Activated CD8-positive, alpha-beta T cell treated with anti-CD3 and anti-CD28 coated beads, Interleukin-2, amount 10 ng/mL, durations not matched to agents 7 days and 5 days (primary cell): ENCODE measurements at regions of chr1 and their contacts with region 1.

Region 1: GRCh38 chr1:29033829-29034466 is 89.8 kb downstream of the TMEM200B start:
- DNase-seq: no peak
- ATAC-seq: peak; percentile 47
- H3K4me3 Mint-ChIP-seq: no peak overlapping the region
- H3K27ac Mint-ChIP-seq: no peak overlapping the region
- H3K4me1 Mint-ChIP-seq: no peaks in the 10 kb centered on the region
- H3K27me3 Mint-ChIP-seq: no peaks in the 10 kb centered on the region

Region 2: GRCh38 chr1:28886731-28887418 is 147.1 kb before region 1 on chr1:
- CTCF ChIA-PET with region 1: interaction called, 315 read pairs
- POLR2A ChIA-PET with region 1: interaction called, 5 read pairs
- DNase-seq: peak; percentile 92
- ATAC-seq: peak; percentile 81
- H3K4me3 Mint-ChIP-seq: peak overlapping the region; percentile 80
- H3K27ac Mint-ChIP-seq: peak overlapping the region; percentile 97
- H3K4me1 Mint-ChIP-seq: peaks cover 56% of the 10 kb centered on the region
- H3K27me3 Mint-ChIP-seq: no peaks in the 10 kb centered on the region

Region 3: DNA sequence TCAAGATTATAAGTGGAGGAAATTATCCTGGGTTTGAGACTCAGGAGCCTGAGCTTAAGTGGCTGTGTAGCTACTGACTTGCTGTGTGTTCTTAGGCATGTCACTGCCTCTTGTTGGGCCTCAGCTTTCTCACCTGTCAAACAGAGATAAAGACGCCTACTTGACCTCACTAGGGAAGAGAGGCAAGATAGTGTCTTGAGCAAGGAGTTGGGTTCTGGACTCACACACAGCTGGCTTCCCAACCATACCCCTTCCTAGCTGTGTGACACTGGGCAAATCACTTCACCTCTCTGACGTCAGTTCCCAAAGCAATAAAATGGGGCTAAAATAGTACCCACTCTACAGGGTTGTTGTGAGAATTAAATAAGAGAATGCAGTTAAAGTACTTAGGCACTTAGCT is 131.2 kb before region 1 on chr1:
- CTCF ChIA-PET with region 1: interaction called, 17 read pairs
- POLR2A ChIA-PET with region 1: no interaction called
- DNase-seq: no peak
- ATAC-seq: no peak
- H3K4me3 Mint-ChIP-seq: no peak overlapping the region
- H3K27ac Mint-ChIP-seq: no peak overlapping the region
- H3K4me1 Mint-ChIP-seq: peaks cover 14% of the 10 kb centered on the region
- H3K27me3 Mint-ChIP-seq: no peaks in the 10 kb centered on the region

Region 4: GRCh38 chr1:28983509-28984310 is 50.2 kb before region 1 on chr1:
- CTCF ChIA-PET with region 1: no interaction called
- POLR2A ChIA-PET with region 1: no interaction called
- DNase-seq: no peak
- ATAC-seq: no peak
- H3K4me3 Mint-ChIP-seq: no peak overlapping the region
- H3K27ac Mint-ChIP-seq: no peak overlapping the region
- H3K4me1 Mint-ChIP-seq: peaks cover 12% of the 10 kb centered on the region
- H3K27me3 Mint-ChIP-seq: no peaks in the 10 kb centered on the region

Region 5: DNA sequence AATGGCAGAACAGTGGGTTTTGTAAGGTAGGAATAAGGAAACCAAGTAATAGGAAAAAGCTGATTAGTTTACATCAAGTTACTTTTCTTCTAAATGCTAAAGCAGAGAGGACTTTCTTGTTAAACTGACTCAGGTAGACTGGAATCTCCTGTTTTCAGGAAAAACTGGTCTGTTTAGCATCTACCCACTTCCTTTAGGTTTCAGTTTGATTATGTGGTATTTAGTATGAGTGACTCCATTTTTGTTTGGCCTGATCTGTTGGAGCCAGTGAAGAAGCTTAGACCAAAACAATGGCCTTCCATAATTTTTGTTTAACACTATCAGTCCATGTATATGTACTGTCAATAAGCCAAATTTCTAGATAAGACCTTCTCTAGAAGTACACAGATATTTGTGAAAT is 31.2 kb before region 1 on chr1:
- CTCF ChIA-PET with region 1: interaction called, 10 read pairs
- POLR2A ChIA-PET with region 1: interaction called, 4 read pairs
- DNase-seq: no peak
- ATAC-seq: no peak
- H3K4me3 Mint-ChIP-seq: no peak overlapping the region
- H3K27ac Mint-ChIP-seq: no peak overlapping the region
- H3K4me1 Mint-ChIP-seq: peaks cover 8% of the 10 kb centered on the region
- H3K27me3 Mint-ChIP-seq: no peaks in the 10 kb centered on the region

Region 6: DNA sequence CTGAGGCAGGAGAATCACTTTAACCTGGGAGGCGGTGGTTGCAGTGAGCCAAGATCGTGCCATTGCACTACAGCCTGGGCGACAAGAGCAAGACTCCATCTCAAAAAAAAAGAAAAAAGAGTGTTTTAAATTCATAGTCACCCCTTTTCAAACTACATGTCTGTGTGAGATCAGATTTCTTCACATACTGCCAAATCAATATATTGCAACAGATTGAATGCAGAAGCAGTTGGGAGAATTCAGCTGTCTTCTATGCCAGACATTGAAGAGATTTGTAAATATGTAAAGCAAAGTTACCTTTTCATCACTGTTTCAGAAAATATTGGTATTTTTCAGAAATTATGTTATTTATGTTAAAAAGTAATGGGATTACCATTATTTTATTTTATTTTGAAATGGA is 11.3 kb before region 1 on chr1:
- CTCF ChIA-PET with region 1: interaction called, 18 read pairs
- POLR2A ChIA-PET with region 1: no interaction called
- DNase-seq: no peak
- ATAC-seq: no peak
- H3K4me3 Mint-ChIP-seq: no peak overlapping the region
- H3K27ac Mint-ChIP-seq: no peak overlapping the region
- H3K4me1 Mint-ChIP-seq: peaks cover 5% of the 10 kb centered on the region
- H3K27me3 Mint-ChIP-seq: no peaks in the 10 kb centered on the region

Region 7: GRCh38 chr1:29090937-29091618 is 57.1 kb after region 1 on chr1:
- CTCF ChIA-PET with region 1: no interaction called
- POLR2A ChIA-PET with region 1: no interaction called
- DNase-seq: no peak
- ATAC-seq: no peak
- H3K4me3 Mint-ChIP-seq: no peak overlapping the region
- H3K27ac Mint-ChIP-seq: no peak overlapping the region
- H3K4me1 Mint-ChIP-seq: peaks cover 2% of the 10 kb centered on the region
- H3K27me3 Mint-ChIP-seq: no peaks in the 10 kb centered on the region

Region 8: DNA sequence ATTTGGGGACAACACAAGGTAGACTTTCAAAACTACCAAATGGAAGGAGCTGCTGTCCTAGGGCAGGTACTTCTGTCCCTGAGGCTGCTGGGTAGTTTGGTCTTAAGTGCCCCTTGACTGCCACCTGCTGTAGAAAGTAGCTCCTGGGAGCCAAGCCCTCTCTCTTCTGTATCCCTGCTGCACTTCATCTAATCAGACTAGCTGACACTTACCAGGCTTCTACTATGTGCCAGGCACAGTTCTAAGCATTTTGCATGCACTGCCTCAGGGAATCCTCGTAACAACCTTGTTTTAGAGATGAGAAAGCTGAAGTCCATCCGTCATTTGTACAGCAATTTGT is 163.6 kb after region 1 on chr1:
- CTCF ChIA-PET with region 1: interaction called, 51 read pairs
- POLR2A ChIA-PET with region 1: no interaction called
- DNase-seq: peak; percentile 64
- ATAC-seq: peak; percentile 90
- H3K4me3 Mint-ChIP-seq: no peak overlapping the region
- H3K27ac Mint-ChIP-seq: no peak overlapping the region
- H3K4me1 Mint-ChIP-seq: peaks cover 25% of the 10 kb centered on the region
- H3K27me3 Mint-ChIP-seq: no peaks in the 10 kb centered on the region